ENCODE measurements at regions of chr2 and their contacts with region 1.

Region 1: GRCh38 chr2:74147727-74148456 is at the start of gene BOLA3:
- DNase-seq: peak; percentile 94
- ATAC-seq: peak; percentile 94
- H3K4me3 Mint-ChIP-seq: no peak within 1 kb of the TSS
- H3K27ac Mint-ChIP-seq: no peak within 1 kb of the TSS
- H3K4me1 Mint-ChIP-seq: peaks cover 5% of the 10 kb centered on the region
- H3K27me3 Mint-ChIP-seq: no peaks in the 10 kb centered on the region
- total RNA-seq, gene BOLA3: 119 to 130 TPM

Region 2: GRCh38 chr2:73759285-73759764 is 388.6 kb before region 1 on chr2:
- CTCF ChIA-PET with region 1: no interaction called
- POLR2A ChIA-PET with region 1: no interaction called
- intact Hi-C with region 1: loop called in 1 of 2 experiments (anchors 10 kb)
- DNase-seq: no peak
- ATAC-seq: no peak
- H3K4me3 Mint-ChIP-seq: no peak overlapping the region
- H3K27ac Mint-ChIP-seq: no peak overlapping the region
- H3K4me1 Mint-ChIP-seq: no peaks in the 10 kb centered on the region
- H3K27me3 Mint-ChIP-seq: no peaks in the 10 kb centered on the region

Region 3: DNA sequence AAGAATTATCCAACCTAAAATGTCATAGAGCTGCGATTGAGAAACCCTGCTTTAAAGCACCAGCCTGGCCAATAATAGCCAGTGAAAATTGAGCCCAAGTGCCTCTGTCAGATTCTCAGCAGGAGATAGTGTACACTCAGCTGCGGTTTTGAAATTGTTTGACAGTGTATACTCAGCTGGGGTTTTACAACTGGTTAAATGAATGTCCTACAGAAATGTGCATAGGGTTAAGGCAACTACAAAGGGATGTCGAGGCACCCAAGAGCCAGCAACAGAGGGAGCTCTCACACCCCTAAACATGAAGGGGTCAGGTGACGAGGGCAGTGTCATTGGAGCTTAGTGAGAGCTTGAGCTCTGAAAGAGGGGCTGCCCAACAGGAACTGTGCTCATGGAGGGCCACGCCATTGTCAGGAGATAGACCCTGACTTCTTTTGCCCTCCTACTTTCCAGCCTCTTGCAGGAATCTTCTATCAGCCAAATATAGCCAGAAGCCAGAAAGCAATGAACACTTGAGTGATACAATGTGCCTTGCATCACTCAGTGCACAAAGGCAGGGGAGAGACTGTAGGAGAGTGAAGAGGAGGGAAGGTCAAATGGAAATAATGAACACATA is 239.9 kb before region 1 on chr2:
- CTCF ChIA-PET with region 1: interaction called, 9 read pairs
- POLR2A ChIA-PET with region 1: no interaction called
- intact Hi-C with region 1: loop called in 1 of 2 experiments (anchors 1 kb)
- DNase-seq: peak; percentile 77
- ATAC-seq: peak; percentile 96
- H3K4me3 Mint-ChIP-seq: no peak overlapping the region
- H3K27ac Mint-ChIP-seq: no peak overlapping the region
- H3K4me1 Mint-ChIP-seq: peaks cover 7% of the 10 kb centered on the region
- H3K27me3 Mint-ChIP-seq: no peaks in the 10 kb centered on the region

Region 4: DNA sequence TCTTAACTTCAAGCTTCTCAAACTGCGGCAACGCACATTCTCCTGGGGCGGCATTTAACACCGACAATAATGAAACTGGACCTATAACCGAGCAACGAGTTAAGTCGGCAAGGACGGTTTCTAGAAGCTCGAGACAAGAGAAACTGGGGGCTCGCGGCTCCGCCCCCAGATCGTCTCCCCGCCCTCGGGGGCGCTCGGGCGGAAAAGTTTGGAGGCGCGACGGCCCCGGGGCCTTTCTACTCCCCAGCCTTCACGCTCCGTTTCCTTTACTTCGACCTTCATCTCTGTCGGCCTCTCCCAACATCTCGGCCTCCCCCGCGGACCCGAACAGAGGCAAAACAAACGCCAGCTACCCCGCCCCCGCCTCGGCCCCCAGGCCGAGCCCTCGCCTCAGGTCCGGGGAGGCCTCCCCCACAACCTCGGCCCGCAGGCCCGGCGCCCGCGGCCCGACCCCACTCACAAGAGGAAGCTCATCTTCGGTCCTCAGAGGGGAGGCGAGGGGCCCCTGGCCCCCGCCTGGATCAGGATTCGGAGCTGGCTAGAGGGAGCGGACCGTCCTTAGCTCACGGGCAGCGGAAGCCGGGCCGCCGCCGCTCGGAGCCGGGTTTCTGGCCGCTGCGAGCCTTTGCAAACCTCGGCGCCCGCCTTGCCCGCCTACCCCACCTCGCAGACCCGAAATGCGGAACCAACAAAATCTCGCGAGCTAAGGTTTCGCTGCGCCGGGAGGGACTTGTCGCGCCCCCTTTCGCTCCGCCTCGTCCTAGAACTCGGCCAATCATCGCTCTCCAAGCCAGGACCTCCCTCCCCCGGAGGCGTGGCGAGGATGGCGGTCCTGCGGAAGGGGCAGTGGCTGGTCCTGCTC is 30.5 kb after region 1 on chr2 and contains the start of gene MOB1A:
- CTCF ChIA-PET with region 1: interaction called, 4 read pairs
- POLR2A ChIA-PET with region 1: interaction called, 3 read pairs
- intact Hi-C with region 1: loop called (anchors 1 to 2 kb)
- DNase-seq: peak; percentile 99
- ATAC-seq: peak; percentile 95
- H3K4me3 Mint-ChIP-seq: peak within 1 kb of the TSS; percentile 82
- H3K27ac Mint-ChIP-seq: peak within 1 kb of the TSS; percentile 87
- H3K4me1 Mint-ChIP-seq: peaks cover 42% of the 10 kb centered on the region
- H3K27me3 Mint-ChIP-seq: no peaks in the 10 kb centered on the region
- total RNA-seq, gene MOB1A: 96.6 to 149 TPM

Region 5: DNA sequence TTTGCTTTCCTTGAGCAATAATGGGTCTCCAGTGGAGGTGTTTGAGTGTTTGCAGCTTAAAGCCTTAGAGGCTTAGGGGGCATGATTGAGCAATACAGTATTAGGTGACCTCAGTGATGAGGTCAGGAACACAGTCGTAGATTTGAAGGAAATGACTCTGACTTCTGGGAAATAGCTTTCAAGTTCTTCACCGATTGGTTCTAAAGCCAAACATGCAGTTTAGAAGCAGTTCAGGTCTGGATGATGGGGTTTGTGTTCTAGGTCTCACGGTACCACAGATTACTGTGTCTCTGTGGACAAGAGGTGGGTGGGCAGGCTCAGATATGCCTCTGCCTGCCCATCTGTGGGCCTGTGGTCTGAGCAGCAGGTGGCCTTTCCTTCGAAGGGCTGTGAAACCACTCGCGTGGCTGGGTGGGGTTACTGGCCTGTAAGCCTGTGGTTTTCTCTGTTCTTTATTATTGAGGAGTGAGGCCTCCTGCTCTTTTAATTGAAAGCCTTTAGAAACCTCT is 58.3 kb after region 1 on chr2:
- CTCF ChIA-PET with region 1: interaction called, 18 read pairs
- POLR2A ChIA-PET with region 1: no interaction called
- intact Hi-C with region 1: loop called in 1 of 2 experiments (anchors 1 kb)
- DNase-seq: peak; percentile 63
- ATAC-seq: peak; percentile 82
- H3K4me3 Mint-ChIP-seq: peak overlapping the region; percentile 61
- H3K27ac Mint-ChIP-seq: peak overlapping the region; percentile 94
- H3K4me1 Mint-ChIP-seq: peaks cover 66% of the 10 kb centered on the region
- H3K27me3 Mint-ChIP-seq: no peaks in the 10 kb centered on the region